GM12878 (cell line): ENCODE measurements at regions of chr18 and their contacts with region 1.

Region 1: DNA sequence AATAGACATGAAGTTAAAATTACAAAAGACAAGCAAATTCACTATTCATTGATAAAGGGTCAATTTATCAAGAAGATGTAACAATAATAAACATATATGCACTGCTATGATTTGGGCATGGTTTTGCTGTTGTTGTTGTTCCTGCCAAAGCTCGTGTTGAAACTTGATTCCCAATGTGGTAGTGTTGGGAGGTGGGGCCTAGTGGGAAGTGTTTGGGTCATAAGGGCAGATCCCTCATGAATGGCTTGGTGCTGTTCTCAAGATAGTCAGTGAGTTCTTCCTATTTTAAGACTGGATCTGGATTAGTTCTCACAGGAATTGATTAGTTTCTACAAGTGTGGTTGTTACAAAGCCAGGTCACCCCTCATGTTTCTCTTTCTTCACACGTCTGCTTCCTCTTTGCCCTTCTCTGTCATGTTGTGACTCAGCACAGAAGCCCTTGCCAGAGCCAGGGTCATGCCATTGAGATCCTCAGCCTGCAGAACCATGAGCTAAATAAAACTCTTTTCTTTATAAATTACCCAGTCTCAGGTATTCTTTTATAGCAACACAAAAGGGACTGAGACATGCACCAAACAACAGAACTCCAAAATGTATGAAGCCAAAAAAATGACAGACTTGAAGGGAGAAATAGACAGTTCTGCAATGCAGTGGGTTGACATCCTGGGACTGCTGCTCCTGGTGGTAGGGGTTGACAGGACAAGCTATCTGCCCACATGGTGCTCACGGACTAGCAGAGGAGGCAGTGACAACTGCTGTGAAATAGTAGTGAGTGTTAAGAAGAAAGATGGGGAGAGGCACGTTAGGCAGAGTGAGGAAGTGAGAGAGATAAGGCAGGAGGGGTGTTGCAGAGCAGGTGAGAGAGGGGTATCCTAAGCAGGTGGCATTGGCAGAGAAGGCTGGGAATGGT is 18.6 kb upstream of the SKA1 start:
- DNase-seq: peak; percentile 79
- ATAC-seq: peak; percentile 93
- H3K4me3 ChIP-seq: no peak overlapping the region
- H3K27ac ChIP-seq: peak overlapping the region; percentile 86
- H3K4me1 ChIP-seq: peaks cover 15% of the 10 kb centered on the region
- H3K27me3 ChIP-seq: no peaks in the 10 kb centered on the region; a peak in 1 of 4 replicates
- CTCF ChIP-seq: peak; percentile 18 to 50 (median 41); a peak in 5 of 6 replicates
- EP300 ChIP-seq: peak; percentile 21 to 39; a peak in 2 of 4 replicates
- POLR2A ChIP-seq: no peak
- RAD21 ChIP-seq: peak; percentile 50

Region 2: DNA sequence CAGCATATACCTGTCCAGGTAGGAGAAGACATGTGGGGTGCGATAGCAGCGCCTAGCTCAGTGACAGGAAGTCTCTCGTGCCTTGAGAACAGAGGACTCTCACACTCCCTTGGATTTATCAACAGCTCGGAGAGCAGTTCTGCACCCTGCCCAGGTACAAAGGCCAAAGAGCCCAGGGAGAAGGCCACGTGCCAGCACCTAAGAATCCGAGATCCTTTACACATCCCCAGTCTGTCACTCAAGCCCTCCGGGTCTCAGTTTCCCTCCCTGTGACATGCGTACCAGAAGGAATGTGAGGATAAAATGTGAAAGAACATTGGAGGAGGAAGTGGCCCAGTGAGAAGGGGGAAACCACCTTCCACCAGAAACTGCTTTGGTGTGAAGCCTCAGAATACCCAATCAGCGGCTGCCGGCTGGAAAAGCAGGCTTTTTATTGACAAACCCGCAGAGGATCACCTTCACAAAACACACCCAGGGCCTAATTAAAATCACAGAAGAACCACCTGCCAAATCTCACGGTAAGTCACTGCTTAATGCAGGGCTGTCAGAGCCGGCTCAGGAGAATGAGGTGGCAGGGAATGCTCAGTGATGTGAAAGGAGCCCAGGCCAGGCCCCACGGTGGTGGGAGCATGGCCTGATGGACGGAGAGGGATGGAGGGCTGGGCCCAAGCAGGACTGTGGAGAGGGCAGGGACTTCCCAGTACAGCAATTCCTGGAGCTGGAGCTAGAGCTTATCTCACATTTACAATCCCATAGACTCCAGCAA is 227.6 kb before region 1 on chr18:
- CTCF ChIA-PET with region 1: interaction called, 6 read pairs
- POLR2A ChIA-PET with region 1: no interaction called
- RAD21 ChIA-PET with region 1: interaction called, 10 read pairs
- SMC1A ChIA-PET with region 1: interaction called, 9 read pairs
- in situ Hi-C with region 1: no loop called
- intact Hi-C with region 1: loop called (anchors 10 kb)
- DNase-seq: no peak
- ATAC-seq: peak; percentile 74
- H3K4me3 ChIP-seq: no peak overlapping the region
- H3K27ac ChIP-seq: no peak overlapping the region
- H3K4me1 ChIP-seq: no peaks in the 10 kb centered on the region
- H3K27me3 ChIP-seq: no peaks in the 10 kb centered on the region
- CTCF ChIP-seq: no peak
- EP300 ChIP-seq: 0 out of 4 replicates have a peak, but pooled peaks of 1 of the 2 experiments have one; percentile 5
- POLR2A ChIP-seq: no peak
- RAD21 ChIP-seq: no peak

Region 3: DNA sequence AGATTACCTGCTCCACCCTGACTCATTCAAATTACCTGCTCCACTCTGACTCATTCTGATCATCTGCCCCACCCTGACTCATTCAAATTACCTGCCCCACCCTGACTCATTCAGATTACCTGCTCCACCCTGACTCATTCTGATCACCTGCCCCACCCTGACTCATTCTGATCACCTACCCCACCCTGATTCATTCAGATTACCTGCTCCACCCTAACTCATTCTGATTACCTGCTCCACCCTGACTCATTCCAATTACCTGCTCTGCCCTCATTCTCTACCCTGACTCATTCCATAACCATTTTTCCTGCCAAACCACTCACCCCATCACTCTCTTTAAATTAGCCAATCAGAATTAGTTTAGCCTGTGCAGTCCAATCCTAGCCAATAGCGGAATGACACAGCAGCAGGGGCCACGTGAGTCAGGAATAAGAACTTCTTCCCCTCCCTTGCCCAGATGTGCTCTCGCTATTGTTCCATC is 116.2 kb before region 1 on chr18:
- CTCF ChIA-PET with region 1: interaction called, 12 read pairs
- POLR2A ChIA-PET with region 1: no interaction called
- RAD21 ChIA-PET with region 1: interaction called, 3 read pairs
- SMC1A ChIA-PET with region 1: interaction called, 5 read pairs
- in situ Hi-C with region 1: no loop called
- intact Hi-C with region 1: no loop called
- DNase-seq: no peak
- ATAC-seq: no peak
- H3K4me3 ChIP-seq: no peak overlapping the region
- H3K27ac ChIP-seq: no peak overlapping the region
- H3K4me1 ChIP-seq: no peaks in the 10 kb centered on the region
- H3K27me3 ChIP-seq: no peaks in the 10 kb centered on the region
- CTCF ChIP-seq: no peak
- EP300 ChIP-seq: no peak
- POLR2A ChIP-seq: no peak
- RAD21 ChIP-seq: no peak

Region 4: DNA sequence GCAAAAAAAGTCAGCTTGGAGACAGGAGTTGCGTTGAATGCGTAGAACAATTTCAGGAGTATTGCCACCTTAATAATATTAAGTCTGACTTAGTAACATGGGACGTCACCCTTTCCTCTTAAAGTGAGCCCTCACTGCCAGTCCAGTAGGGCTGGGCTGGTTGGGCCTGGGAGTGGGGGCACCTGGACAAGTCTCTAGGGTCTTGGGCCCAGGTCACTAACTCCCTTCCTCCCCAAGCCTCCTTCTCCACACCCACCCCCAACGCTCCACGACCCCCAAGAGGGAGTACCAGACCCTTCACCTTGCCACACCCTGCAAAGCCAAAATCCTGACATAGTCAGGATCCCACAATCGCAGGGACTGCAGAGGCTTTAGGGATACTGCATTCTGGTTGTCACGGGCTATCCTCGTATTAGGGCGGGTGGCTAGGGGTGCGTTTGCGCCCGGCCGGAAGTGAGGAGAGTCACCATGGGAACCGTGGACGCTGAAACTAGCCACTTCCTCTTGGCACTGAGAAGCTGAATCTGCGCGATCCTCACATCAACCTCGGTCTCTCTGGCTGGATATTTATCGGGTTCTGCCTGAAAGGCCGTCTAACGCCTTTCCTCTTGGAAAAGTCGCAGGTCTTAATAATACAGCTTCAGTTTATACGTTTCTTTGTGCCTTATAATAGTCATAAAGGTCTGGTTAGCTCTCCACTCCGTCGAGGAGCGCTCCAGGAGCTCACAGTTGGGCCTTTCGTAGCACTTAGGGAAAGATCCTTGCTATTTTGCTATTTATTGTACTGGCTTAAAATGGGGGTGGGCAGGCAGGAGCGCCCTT is 58.5 kb before region 1 on chr18:
- CTCF ChIA-PET with region 1: interaction called, 6 read pairs
- POLR2A ChIA-PET with region 1: interaction called, 4 read pairs
- RAD21 ChIA-PET with region 1: interaction called, 13 read pairs
- SMC1A ChIA-PET with region 1: interaction called, 7 read pairs
- in situ Hi-C with region 1: no loop called
- intact Hi-C with region 1: no loop called
- DNase-seq: peak; percentile 69
- ATAC-seq: peak; percentile 100
- H3K4me3 ChIP-seq: peak overlapping the region; percentile 56; the same call in 1 of the 2 replicates
- H3K27ac ChIP-seq: no peak overlapping the region
- H3K4me1 ChIP-seq: peaks cover 7% of the 10 kb centered on the region
- H3K27me3 ChIP-seq: no peaks in the 10 kb centered on the region; a peak in 1 of 4 replicates
- CTCF ChIP-seq: no peak
- EP300 ChIP-seq: 0 out of 4 replicates have a peak, but pooled peaks of 1 of the 2 experiments have one; percentile 29
- POLR2A ChIP-seq: no peak
- RAD21 ChIP-seq: no peak

Region 5: DNA sequence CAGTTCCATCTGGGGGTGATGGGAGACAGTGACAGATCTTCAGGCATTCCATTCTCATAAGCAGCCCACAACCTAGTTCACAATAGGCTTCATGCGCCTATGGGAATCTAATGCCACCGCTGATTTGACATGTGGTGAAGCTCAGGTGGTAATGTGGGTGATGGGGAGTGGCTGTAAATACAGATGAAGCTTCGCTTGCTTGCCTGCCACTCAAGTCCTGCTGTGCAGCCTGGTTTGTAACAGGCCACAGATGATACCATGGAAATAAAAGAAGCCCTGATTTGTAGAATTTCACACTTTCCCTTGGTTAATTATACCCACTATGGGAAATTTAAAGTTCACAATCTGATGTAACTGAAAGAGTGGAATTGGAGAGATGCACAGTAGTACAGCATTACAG is 28.3 kb before region 1 on chr18:
- CTCF ChIA-PET with region 1: interaction called, 22 read pairs
- POLR2A ChIA-PET with region 1: interaction called, 3 read pairs
- RAD21 ChIA-PET with region 1: interaction called, 4 read pairs
- SMC1A ChIA-PET with region 1: interaction called, 22 read pairs
- in situ Hi-C with region 1: no loop called
- intact Hi-C with region 1: no loop called
- DNase-seq: no peak
- ATAC-seq: no peak
- H3K4me3 ChIP-seq: no peak overlapping the region
- H3K27ac ChIP-seq: no peak overlapping the region
- H3K4me1 ChIP-seq: peaks cover 7% of the 10 kb centered on the region
- H3K27me3 ChIP-seq: no peaks in the 10 kb centered on the region
- CTCF ChIP-seq: no peak
- EP300 ChIP-seq: no peak
- POLR2A ChIP-seq: no peak
- RAD21 ChIP-seq: no peak

Region 6: DNA sequence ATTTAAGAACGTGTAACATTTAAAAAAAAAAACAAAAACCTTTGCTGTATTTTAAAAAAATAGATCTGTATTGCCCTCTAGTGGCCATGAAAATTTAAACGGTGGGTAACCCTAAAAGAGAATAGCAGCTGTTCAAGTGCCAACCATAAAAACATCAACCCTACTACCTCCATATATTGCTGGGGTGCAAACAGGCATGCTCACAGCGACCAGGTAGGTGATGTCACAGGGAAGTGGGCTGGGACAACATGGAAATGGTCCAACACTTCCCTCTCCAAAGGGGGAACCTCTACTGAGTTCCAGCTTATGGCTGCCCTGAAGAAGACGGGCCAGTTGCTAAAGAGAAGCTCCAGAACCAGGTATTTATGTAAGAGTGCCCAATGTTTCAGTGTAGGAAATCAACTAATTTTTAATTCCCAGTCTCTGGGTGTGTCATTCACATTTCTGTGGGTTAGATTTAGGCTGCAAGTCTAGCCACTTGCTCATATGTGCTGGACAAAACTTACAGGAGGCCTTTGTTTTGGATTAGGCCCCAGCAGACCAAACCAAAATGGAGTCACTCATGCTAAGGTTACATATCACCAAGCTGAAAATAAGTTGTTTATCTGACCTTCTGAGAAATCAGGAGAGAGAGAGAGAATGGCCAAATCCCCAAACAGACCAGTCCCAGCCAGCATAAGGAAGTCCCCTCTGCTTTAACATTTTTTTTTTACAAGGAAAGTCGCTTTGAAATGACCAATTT is 73.1 kb after region 1 on chr18:
- CTCF ChIA-PET with region 1: interaction called, 42 read pairs
- POLR2A ChIA-PET with region 1: no interaction called
- RAD21 ChIA-PET with region 1: interaction called, 16 read pairs
- SMC1A ChIA-PET with region 1: interaction called, 6 read pairs
- in situ Hi-C with region 1: no loop called
- intact Hi-C with region 1: no loop called
- DNase-seq: no peak
- ATAC-seq: peak; percentile 59
- H3K4me3 ChIP-seq: no peak overlapping the region
- H3K27ac ChIP-seq: no peak overlapping the region
- H3K4me1 ChIP-seq: no peaks in the 10 kb centered on the region
- H3K27me3 ChIP-seq: peaks cover 2 to 3% of the 10 kb centered on the region in 2 experiments; a peak in 2 of 4 replicates
- CTCF ChIP-seq: peak; percentile 35 to 49 (median 39); a peak in 5 of 6 replicates
- EP300 ChIP-seq: no peak
- POLR2A ChIP-seq: no peak
- RAD21 ChIP-seq: peak; percentile 42